ENCODE measurements at regions of chr18 and their contacts with region 1.

Region 1: DNA sequence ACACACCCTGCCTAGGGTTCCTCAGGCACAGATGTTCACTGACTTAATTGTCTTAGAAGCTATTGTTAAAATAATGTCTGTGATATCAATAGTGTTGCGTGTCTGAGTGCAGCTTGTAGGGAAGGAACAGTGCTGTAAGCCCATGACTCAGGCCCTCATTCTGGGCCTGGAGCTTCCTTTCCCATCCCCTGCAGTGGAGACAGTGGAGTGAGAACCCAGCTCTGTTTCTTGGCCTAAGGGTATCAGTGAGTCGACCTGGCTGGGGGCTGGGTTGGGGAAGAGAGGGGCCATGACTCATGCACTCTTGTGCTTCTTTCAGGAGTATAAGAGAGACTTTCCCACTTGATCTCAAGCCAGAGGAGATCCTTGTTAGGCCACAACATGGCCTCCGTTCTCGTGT is 106.8 kb downstream of the HRH4 start:
- DNase-seq: no peak
- H3K4me3 ChIP-seq: no peak overlapping the region
- H3K27ac ChIP-seq: no peak overlapping the region
- H3K4me1 ChIP-seq: no peaks in the 10 kb centered on the region
- CTCF ChIP-seq: no peak

Region 2: DNA sequence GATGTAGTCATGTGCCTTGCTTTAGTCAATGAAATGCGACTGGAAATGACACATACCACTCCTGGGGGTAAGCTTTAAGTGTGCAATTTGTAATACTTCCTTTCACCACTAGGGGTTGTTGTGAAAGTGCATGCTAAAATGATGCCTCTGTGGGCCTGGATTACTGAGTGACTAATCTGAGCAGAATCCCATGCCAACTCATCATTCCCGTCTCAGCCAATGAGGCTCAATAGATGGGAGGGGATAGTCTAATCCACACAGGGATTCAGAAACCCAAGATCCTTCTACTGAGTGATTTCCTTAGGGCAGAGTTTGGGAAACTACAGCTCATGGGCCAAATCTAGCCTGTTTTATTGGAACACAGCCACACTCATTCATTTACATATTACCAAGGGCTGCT is 52.8 kb before region 1 on chr18:
- CTCF ChIA-PET with region 1: no interaction called
- POLR2A ChIA-PET with region 1: no interaction called
- intact Hi-C with region 1: loop called (anchors 10 kb)
- DNase-seq: peak; percentile 60
- H3K4me3 ChIP-seq: no peak overlapping the region
- H3K27ac ChIP-seq: no peak overlapping the region
- H3K4me1 ChIP-seq: no peaks in the 10 kb centered on the region
- CTCF ChIP-seq: peak; percentile 82

Region 3: DNA sequence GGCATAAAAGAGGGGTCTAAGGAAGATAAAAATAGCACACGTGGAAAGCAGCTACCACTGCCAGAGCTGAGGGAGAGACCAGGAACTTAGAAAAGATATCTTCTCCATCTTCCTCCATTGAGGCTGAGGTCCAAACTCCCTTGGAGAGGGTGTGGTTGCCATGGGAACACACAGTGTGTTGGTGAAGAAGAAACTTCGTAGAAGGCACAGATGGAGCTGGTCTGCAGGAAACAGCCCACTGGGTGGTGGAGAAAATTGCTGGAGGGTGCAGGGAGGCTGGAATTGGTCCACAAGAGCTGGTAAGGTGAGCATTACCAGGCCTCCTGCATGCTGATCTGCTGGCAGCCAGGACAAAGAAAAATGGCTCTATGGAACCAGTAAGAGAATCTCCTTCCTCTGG is 84.2 kb after region 1 on chr18:
- CTCF ChIA-PET with region 1: no interaction called
- POLR2A ChIA-PET with region 1: no interaction called
- intact Hi-C with region 1: no loop called
- DNase-seq: no peak
- H3K4me3 ChIP-seq: no peak overlapping the region
- H3K27ac ChIP-seq: no peak overlapping the region
- H3K4me1 ChIP-seq: no peaks in the 10 kb centered on the region
- CTCF ChIP-seq: no peak

Region 4: DNA sequence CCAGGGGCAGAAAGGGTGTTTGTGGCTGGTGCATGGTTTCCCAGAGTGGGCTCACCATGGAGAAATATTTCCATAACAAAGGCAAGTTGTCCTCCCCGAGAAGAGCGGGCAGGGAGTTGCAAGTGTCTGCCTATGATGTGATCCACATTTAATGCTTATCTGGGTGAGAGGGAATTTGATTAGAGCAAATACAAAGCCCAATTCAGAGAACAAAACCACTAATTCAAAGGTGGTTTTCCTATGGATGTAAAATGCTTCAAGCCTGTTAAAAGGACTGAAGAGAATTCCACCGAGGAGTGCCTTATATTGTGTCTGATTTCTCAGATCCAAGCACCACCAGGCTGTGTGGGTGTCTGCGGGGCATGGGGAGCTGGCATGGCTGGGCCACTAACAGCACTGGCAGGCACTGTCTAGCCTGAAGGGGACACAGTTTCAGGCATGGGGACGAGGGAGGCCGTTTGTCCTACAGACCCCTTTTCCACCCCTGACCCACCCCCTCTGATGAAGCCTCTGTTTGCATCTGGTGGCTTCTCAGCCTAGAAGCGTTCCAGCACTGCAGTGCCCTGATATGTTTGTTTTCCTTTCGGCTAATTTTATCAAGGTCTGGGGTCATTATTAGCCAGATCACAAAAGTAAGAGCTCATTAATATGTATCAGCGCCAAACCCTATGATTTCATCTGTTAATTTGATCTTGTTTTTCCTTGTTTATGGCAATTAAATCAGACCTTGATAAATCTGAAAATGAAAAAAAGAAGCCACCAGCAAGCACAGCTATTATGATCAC is 250.6 kb after region 1 on chr18:
- CTCF ChIA-PET with region 1: no interaction called
- POLR2A ChIA-PET with region 1: no interaction called
- intact Hi-C with region 1: no loop called
- DNase-seq: no peak
- H3K4me3 ChIP-seq: no peak overlapping the region
- H3K27ac ChIP-seq: no peak overlapping the region
- H3K4me1 ChIP-seq: no peaks in the 10 kb centered on the region
- CTCF ChIP-seq: no peak

Region 5: GRCh38 chr18:25334588-25334987 is 767.4 kb after region 1 on chr18:
- CTCF ChIA-PET with region 1: no interaction called
- POLR2A ChIA-PET with region 1: no interaction called
- intact Hi-C with region 1: no loop called
- DNase-seq: no peak
- H3K4me3 ChIP-seq: no peak overlapping the region
- H3K27ac ChIP-seq: no peak overlapping the region
- H3K4me1 ChIP-seq: no peaks in the 10 kb centered on the region
- CTCF ChIP-seq: 0 out of 2 replicates have a peak, but pooled peaks have one; percentile 23